H1 (cell line): ENCODE measurements at regions of chr12 and their contacts with region 1.

Region 1: GRCh38 chr12:14572401-14572800 is 4.7 kb upstream of the PLBD1 start:
- DNase-seq: no peak
- H3K4me3 ChIP-seq: no peak overlapping the region
- H3K27ac ChIP-seq: no peak overlapping the region
- H3K4me1 ChIP-seq: peaks cover 0 to 3% (median 0%) of the 10 kb centered on the region in 4 experiments; a peak in 1 of 7 replicates
- H3K27me3 ChIP-seq: peaks cover 0 to 3% (median 0%) of the 10 kb centered on the region in 4 experiments; a peak in 3 of 7 replicates
- CTCF ChIP-seq: peak in 1 of 3 experiments; percentile 9; a peak in 1 of 4 replicates
- EP300 ChIP-seq: no peak
- POLR2A ChIP-seq: no peak
- RAD21 ChIP-seq: peak; percentile 41 to 58

Region 2: DNA sequence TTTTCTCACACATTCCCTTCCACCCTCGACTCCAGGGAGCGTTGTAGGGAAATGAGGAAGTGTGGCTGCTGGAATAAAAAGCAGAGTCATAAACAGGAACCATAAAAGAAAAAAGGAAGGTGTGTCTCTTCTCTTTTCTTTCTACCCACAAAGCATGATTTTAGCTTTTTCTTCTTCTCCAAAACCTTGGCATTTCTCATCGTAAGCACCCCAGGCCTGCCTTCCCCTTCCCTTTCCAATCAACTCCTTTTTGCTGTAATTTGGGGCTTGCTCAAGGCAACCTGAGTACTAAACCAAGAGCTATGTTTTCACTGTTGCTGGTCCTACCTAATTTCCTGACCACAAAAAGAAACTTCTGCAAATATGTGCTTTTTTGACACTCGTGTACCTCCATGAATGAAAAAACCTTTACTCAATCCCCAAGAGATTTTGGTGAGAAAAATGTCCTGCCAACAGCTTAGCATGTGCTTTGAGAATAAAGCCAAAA is 13.9 kb before region 1 on chr12:
- CTCF ChIA-PET with region 1: interaction called, 24 read pairs
- POLR2A ChIA-PET with region 1: interaction called, 3 read pairs
- DNase-seq: no peak
- H3K4me3 ChIP-seq: no peak overlapping the region
- H3K27ac ChIP-seq: no peak overlapping the region
- H3K4me1 ChIP-seq: peaks cover 0 to 2% (median 0%) of the 10 kb centered on the region in 4 experiments; a peak in 3 of 7 replicates
- H3K27me3 ChIP-seq: no peaks in the 10 kb centered on the region
- CTCF ChIP-seq: no peak
- EP300 ChIP-seq: no peak
- POLR2A ChIP-seq: no peak
- RAD21 ChIP-seq: no peak

Region 3: DNA sequence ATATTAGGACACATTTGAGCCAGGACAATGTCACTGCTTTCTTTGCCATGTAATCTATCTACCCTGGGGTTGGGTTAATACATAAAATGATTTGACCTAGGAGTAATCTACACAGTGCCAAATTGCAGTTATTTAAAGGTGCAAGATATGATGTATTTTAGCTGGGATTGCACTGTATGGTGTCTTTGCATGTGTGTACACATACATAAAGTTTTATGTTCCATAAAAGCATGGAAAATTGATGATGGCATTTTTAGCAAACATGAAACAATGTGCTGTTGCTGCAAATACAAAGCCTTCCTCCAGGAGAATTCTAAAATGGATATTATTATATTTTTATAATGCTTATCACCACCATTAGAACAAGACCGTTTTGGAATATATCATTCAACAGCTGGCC is 19.3 kb after region 1 on chr12:
- CTCF ChIA-PET with region 1: interaction called, 10 read pairs
- POLR2A ChIA-PET with region 1: no interaction called
- DNase-seq: no peak
- H3K4me3 ChIP-seq: no peak overlapping the region
- H3K27ac ChIP-seq: no peak overlapping the region
- H3K4me1 ChIP-seq: no peaks in the 10 kb centered on the region; a peak in 1 of 7 replicates
- H3K27me3 ChIP-seq: no peaks in the 10 kb centered on the region
- CTCF ChIP-seq: no peak
- EP300 ChIP-seq: no peak
- POLR2A ChIP-seq: no peak
- RAD21 ChIP-seq: no peak

Region 4: DNA sequence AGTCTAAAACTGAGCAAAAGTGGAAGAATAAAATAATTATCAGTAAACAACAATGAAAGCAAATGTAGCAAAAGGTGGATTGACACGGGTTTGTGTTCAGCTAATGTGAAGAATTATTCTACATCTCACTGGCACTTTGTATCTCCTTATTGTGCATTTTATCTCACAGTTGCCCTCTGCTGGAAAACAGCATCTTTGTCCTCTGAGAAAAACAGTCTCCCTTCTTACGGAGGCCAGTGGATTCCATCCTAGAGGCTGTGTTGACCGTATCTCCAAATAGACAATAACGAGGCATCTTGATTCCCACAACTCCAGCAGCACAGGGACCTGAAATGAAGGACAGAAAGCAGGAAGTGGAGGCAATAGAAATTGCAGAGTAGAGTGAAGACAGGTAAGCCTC is 46.6 kb after region 1 on chr12:
- CTCF ChIA-PET with region 1: interaction called, 31 read pairs
- POLR2A ChIA-PET with region 1: no interaction called
- DNase-seq: no peak
- H3K4me3 ChIP-seq: no peak overlapping the region
- H3K27ac ChIP-seq: no peak overlapping the region
- H3K4me1 ChIP-seq: no peaks in the 10 kb centered on the region
- H3K27me3 ChIP-seq: peaks cover 0 to 2% (median 0%) of the 10 kb centered on the region in 4 experiments; a peak in 1 of 7 replicates
- CTCF ChIP-seq: peak in 2 of 3 experiments; percentile 34 to 57; a peak in 2 of 4 replicates
- EP300 ChIP-seq: no peak
- POLR2A ChIP-seq: no peak
- RAD21 ChIP-seq: peak; percentile 57 to 62